Right ventricle myocardium inferior (tissue), 1 donor: ENCODE measurements at regions of chr4 and their contacts with region 1.

Region 1: GRCh38 chr4:185183619-185184281 is 20.1 kb downstream of the CFAP97 start:
- DNase-seq: no peak
- ATAC-seq: peak; percentile 72

Region 2: DNA sequence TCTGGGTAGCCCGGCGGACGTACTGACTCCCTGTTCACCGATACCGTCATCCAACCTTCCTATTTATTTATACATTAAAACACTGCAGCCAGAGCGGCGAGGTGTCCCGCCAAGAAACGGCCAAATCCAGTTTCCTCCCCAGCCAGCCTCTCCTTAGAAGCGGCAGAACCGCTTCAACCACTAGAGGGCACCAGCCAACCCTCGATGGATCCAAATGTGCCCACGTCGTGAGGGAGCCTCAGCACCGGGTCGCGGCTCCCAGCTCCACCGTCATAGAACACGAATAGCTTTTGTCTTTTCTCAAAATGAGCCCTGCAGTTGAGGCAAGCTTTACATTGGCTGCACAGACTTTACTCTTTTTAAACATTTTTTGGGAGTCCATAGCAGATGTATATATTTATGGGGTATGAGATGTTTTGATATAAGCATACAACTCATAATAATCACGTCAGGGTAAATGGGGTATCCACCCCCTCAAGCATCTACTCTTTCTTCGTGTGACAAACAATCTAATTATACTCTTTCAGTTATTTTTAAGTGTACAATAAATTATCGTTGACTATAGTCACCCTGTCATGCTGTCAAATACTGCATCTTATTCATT is 178.4 kb before region 1 on chr4:
- intact Hi-C with region 1: loop called (anchors 10 kb)
- DNase-seq: peak; percentile 90
- ATAC-seq: peak; percentile 90

Region 3: GRCh38 chr4:185031611-185032010 is 152.1 kb before region 1 on chr4:
- intact Hi-C with region 1: no loop called
- DNase-seq: no peak
- ATAC-seq: no peak

Region 4: DNA sequence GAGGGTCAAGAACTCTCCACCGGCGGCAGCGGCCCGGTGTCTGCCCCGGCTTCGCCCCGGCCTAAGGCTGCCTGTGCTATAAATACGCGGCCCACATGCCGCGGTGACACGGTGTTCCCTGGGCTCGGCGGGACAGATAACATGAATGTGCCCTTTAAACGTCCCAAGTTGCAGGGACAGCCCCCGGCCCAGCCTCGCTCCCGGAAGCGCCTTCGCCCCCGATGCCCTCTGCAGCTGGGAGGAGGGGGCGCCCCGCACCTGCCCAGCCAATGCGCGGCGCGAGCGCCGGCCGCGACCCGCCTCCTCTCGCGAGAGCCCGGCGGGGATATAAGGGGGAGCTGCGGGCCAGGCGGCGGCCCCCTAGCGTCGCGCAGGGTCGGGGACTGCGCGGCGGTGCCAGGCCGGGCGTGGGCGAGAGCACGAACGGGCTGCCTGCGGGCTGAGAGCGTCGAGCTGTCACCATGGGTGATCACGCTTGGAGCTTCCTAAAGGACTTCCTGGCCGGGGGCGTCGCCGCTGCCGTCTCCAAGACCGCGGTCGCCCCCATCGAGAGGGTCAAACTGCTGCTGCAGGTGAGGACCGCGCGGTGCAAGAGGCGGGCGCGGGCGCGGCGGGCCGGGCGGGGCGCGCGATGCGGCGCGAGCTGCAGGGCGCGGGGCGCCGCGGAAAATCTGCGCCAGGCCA is 40.7 kb before region 1 on chr4 and contains the start of gene SLC25A4:
- intact Hi-C with region 1: loop called (anchors 5 kb)
- DNase-seq: peak; percentile 94
- ATAC-seq: peak; percentile 92
- total RNA-seq, gene SLC25A4: 2,233 TPM

Region 5: DNA sequence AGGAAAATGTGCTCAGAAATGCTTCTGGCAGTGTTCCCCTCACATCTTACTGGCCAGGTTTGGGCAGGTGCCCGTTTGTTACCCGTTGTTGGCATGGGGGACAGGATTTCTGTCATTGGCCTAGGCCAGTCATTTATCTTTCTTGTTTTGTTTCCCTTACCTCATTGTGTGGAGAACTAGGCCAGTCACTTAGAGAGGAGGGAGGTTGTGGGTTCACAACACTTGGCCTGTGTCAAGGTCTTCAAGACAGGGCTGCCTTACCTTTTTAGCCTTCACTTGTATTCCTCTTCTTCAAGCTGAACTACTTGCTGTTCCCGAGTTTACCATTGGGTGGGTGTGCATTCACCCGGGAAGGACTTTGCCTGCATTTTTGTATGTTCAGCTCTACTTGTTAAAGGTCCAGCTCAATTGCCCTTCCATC is 43.4 kb after region 1 on chr4:
- intact Hi-C with region 1: no loop called
- DNase-seq: no peak
- ATAC-seq: peak; percentile 31